Psoas muscle (tissue), 8 donors: ENCODE measurements at regions of chr11 and their contacts with region 1.

Region 1: DNA sequence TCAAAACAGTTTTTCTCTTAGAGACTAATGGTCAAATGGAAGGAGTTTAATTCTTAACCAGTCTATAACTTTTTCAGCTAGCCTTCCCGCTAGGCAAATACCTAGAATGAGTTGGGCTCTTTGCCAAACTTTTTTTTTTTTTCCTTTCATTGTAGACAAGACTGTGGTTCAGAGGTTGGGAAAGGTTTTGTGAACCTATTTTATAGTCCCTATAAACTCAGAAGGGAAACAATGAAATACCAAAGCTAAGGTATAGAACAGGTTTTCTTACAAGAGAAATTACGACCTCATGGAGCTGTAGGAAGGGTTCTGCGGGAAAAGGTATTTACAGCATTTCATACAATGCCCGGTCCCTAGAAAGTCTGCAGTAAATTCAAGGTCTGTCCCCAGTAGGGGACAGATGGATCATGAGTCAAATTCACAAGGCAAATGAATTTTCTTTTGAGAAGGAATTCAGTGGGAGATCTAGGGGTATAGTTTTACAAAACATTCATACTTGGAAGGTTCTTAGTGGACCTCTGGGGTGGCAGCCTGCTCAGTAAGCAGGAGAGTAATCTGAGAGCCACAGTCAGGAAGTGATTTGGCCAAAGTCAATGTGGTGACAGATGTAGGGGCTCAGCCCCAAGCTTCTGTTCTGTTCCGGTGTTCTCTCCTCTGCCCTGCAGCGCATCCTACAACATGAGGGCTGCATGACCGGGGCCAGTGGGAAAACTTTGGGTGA is 146.8 kb downstream of the DBX1 start:
- DNase-seq: peak; percentile 56 to 64
- ATAC-seq: peak; percentile 94 to 97 (median 96)
- H3K4me3 ChIP-seq: peak overlapping the region; percentile 44
- H3K27ac ChIP-seq: peak overlapping the region; percentile 67
- H3K4me1 ChIP-seq: peaks cover 27% of the 10 kb centered on the region
- H3K27me3 ChIP-seq: no peaks in the 10 kb centered on the region
- CTCF ChIP-seq: no peak

Region 2: GRCh38 chr11:19890308-19890707 is 123.2 kb before region 1 on chr11:
- intact Hi-C with region 1: no loop called
- DNase-seq: no peak
- ATAC-seq: no peak
- H3K4me3 ChIP-seq: no peak overlapping the region
- H3K27ac ChIP-seq: no peak overlapping the region
- H3K4me1 ChIP-seq: peaks cover 6% of the 10 kb centered on the region
- H3K27me3 ChIP-seq: no peaks in the 10 kb centered on the region
- CTCF ChIP-seq: no peak

Region 3: GRCh38 chr11:19978668-19979518 is 34.6 kb before region 1 on chr11:
- intact Hi-C with region 1: no loop called
- DNase-seq: no peak
- ATAC-seq: peak in 1 of 4 donors; percentile 35
- H3K4me3 ChIP-seq: no peak overlapping the region
- H3K27ac ChIP-seq: no peak overlapping the region
- H3K4me1 ChIP-seq: peaks cover 5% of the 10 kb centered on the region
- H3K27me3 ChIP-seq: no peaks in the 10 kb centered on the region
- CTCF ChIP-seq: no peak

Region 4: DNA sequence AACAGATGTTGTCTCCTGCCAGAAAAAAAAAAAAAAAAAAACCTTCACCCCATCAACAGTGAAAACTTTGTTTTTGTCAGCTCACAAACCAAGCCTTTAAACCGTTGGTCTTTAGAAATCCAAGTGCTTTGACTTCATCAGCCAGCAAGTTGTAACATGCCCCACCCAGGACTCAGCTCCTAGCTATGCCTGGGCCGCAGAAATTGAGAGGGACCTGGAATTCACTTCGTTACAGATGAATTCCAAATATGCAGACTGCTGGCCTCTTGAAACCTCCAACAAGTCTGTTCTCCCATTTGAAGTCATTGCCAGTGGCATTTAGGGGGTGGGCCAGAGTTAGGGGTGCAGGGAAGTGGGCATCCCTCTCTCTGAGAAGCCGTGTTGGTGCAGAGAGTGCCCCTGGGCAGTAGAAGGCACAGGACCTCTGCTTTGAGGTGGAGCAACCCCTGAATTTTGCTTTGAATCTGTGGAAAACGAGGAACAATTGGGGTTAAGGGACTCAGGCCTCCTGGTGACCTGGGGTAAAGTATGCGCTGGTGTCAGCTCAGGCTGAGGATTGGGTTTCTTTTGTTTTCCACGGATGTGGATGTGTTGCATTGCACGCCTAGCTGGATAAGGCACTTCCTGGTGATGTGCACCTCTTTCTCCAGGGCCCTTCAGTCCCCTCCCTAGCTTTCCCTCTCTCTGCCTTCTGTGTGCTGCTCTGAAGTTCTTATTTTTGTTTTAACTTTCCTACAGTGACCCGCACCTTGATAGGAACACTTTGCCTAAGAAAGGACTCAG is 37.2 kb after region 1 on chr11:
- intact Hi-C with region 1: loop called in 1 of 2 experiments (anchors 5 kb)
- DNase-seq: no peak
- ATAC-seq: no peak
- H3K4me3 ChIP-seq: no peak overlapping the region
- H3K27ac ChIP-seq: no peak overlapping the region
- H3K4me1 ChIP-seq: peaks cover 41% of the 10 kb centered on the region
- H3K27me3 ChIP-seq: no peaks in the 10 kb centered on the region
- CTCF ChIP-seq: no peak